ENCODE measurements at regions of chr4 and their contacts with region 1.

Region 1: GRCh38 chr4:158172261-158173258 is at the start of gene GASK1B:
- DNase-seq: peak; percentile 37
- CTCF ChIP-seq: peak; percentile 54

Region 2: GRCh38 chr4:158161551-158162354 is 10.8 kb before region 1 on chr4:
- CTCF ChIA-PET with region 1: interaction called, 13 read pairs
- POLR2A ChIA-PET with region 1: no interaction called
- DNase-seq: no peak
- CTCF ChIP-seq: no peak

Region 3: GRCh38 chr4:158182736-158183135 is 10.2 kb after region 1 on chr4:
- CTCF ChIA-PET with region 1: interaction called, 21 read pairs
- POLR2A ChIA-PET with region 1: no interaction called
- DNase-seq: no peak
- CTCF ChIP-seq: no peak

Region 4: DNA sequence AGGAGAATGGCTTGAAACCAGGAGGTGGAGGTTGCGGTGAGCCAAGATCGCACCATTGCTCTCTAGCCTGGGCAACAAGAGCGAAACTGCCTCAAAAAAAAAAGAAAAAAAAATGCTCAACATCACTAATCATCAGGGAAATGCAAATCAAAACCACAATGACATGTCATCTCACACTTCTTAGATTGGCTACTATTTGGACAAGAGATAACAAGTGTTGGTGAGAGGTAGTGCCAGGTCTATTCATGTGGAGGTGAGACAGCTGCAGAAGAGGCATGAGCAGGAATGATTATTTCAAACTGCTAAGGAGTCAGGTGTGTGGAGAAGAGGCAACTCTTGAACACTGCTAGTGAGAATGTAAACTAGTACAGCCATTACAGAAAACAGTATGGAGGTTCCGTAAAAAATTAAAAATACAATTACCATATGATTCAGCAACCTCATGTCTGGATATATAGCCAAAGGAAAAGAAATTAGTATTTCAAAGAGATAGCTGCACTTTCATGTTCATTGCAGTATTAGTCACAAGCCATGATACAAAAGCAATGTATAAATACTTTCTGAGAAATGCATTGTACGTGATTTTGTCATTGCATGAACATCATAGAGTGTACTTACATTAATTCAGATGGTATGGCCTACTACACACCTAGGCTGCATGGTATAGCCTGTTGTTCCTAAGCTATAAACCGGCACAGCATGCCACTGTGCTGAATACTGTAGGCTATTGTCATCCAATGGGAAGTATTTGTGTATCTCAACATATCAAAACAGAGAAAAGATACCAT is 113.1 kb after region 1 on chr4:
- CTCF ChIA-PET with region 1: no interaction called
- POLR2A ChIA-PET with region 1: no interaction called
- DNase-seq: no peak
- CTCF ChIP-seq: no peak

Measured in GM10248 (cell line).